ENCODE measurements at regions of chr10 and their contacts with region 1.

Region 1: GRCh38 chr10:43348511-43349312 is 22.7 kb upstream of the FXYD4 start:
- DNase-seq: peak; percentile 91
- H3K4me3 Mint-ChIP-seq: no peak overlapping the region
- H3K27ac Mint-ChIP-seq: peak overlapping the region; percentile 64
- H3K4me1 Mint-ChIP-seq: peaks cover 51% of the 10 kb centered on the region
- H3K27me3 Mint-ChIP-seq: peaks cover 14% of the 10 kb centered on the region

Region 2: GRCh38 chr10:43204943-43205671 is 143.6 kb before region 1 on chr10:
- CTCF ChIA-PET with region 1: interaction called, 19 read pairs
- POLR2A ChIA-PET with region 1: no interaction called
- DNase-seq: peak; percentile 73
- H3K4me3 Mint-ChIP-seq: no peak overlapping the region
- H3K27ac Mint-ChIP-seq: no peak overlapping the region
- H3K4me1 Mint-ChIP-seq: peaks cover 12% of the 10 kb centered on the region
- H3K27me3 Mint-ChIP-seq: no peaks in the 10 kb centered on the region

Region 3: GRCh38 chr10:43265799-43266721 is 82.7 kb before region 1 on chr10:
- CTCF ChIA-PET with region 1: interaction called, 24 read pairs
- POLR2A ChIA-PET with region 1: interaction called, 3 read pairs
- DNase-seq: peak; percentile 66
- H3K4me3 Mint-ChIP-seq: peak overlapping the region; percentile 70
- H3K27ac Mint-ChIP-seq: no peak overlapping the region
- H3K4me1 Mint-ChIP-seq: peaks cover 6% of the 10 kb centered on the region
- H3K27me3 Mint-ChIP-seq: peaks cover 48% of the 10 kb centered on the region

Region 4: DNA sequence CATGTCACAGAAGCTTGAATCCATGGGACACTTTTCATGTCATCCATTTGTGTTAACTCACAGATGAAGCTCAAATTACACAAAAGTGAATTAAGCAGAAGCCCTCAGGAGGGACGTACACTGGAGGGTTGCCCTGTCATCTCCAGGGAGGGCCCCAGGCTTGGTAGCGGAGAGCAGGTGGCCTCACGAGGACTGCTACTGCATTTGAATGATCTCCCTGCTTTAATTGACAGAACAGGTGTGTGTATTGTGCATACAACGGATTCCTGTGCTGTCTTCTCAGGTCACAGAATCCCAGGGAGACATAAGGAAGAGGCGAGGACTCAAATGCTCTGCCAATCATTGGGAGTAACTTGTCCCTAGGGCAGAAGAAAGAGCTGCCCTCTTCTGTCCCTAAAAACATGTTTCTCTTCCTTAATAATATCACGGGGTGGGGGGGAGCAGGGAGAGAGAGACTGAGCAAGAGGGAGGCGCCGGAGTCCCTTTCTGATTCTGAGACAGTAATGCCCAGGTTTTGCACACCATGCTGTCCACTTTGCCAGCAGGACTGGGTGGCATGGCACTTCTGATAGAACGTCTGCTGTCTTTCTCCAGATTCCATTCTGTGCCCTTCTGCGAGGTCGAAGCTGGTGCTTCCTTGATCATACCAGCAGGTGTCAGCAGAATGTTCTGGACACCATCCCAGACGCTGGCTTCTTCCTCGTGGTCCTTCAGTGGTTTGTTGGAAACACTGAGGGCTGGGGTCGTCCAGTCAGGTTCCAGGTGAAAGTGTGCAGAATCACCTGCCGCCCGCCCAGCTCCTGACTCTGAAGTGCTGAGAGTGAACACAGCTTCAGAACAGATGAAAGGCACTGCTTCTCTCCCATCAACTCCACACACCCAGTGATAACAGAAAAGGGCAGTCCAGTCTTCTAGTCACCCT is 55.7 kb before region 1 on chr10:
- CTCF ChIA-PET with region 1: interaction called, 105 read pairs
- POLR2A ChIA-PET with region 1: interaction called, 19 read pairs
- DNase-seq: peak; percentile 68
- H3K4me3 Mint-ChIP-seq: peak overlapping the region; percentile 19
- H3K27ac Mint-ChIP-seq: peak overlapping the region; percentile 76
- H3K4me1 Mint-ChIP-seq: peaks cover 85% of the 10 kb centered on the region
- H3K27me3 Mint-ChIP-seq: peaks cover 7% of the 10 kb centered on the region

Region 5: GRCh38 chr10:43461950-43462349 is 113.2 kb after region 1 on chr10:
- CTCF ChIA-PET with region 1: interaction called, 12 read pairs
- POLR2A ChIA-PET with region 1: no interaction called
- DNase-seq: no peak
- H3K4me3 Mint-ChIP-seq: no peak overlapping the region
- H3K27ac Mint-ChIP-seq: no peak overlapping the region
- H3K4me1 Mint-ChIP-seq: peaks cover 16% of the 10 kb centered on the region
- H3K27me3 Mint-ChIP-seq: no peaks in the 10 kb centered on the region